Vagina (tissue), 2 donors: ENCODE measurements at regions of chr1 and their contacts with region 1.

Region 1: GRCh38 chr1:115423776-115424175 is 85.7 kb upstream of the NGF start:
- DNase-seq: no peak
- H3K4me3 ChIP-seq: no peak overlapping the region
- H3K27ac ChIP-seq: no peak overlapping the region
- H3K4me1 ChIP-seq: no peaks in the 10 kb centered on the region
- H3K27me3 ChIP-seq: no peaks in the 10 kb centered on the region
- CTCF ChIP-seq: no peak
- POLR2A ChIP-seq: no peak

Region 2: GRCh38 chr1:115373305-115373704 is 50.5 kb before region 1 on chr1:
- intact Hi-C with region 1: no loop called
- DNase-seq: no peak
- H3K4me3 ChIP-seq: no peak overlapping the region
- H3K27ac ChIP-seq: no peak overlapping the region
- H3K4me1 ChIP-seq: no peaks in the 10 kb centered on the region
- H3K27me3 ChIP-seq: no peaks in the 10 kb centered on the region
- CTCF ChIP-seq: no peak
- POLR2A ChIP-seq: no peak

Region 3: GRCh38 chr1:115624859-115625258 is 201.1 kb after region 1 on chr1:
- intact Hi-C with region 1: no loop called
- DNase-seq: no peak
- H3K4me3 ChIP-seq: no peak overlapping the region
- H3K27ac ChIP-seq: no peak overlapping the region
- H3K4me1 ChIP-seq: no peaks in the 10 kb centered on the region
- H3K27me3 ChIP-seq: no peaks in the 10 kb centered on the region
- CTCF ChIP-seq: no peak
- POLR2A ChIP-seq: no peak

Region 4: GRCh38 chr1:116556289-116557006 is 1132.7 kb after region 1 on chr1:
- intact Hi-C with region 1: loop called (anchors 5 kb)
- DNase-seq: no peak
- H3K4me3 ChIP-seq: no peak overlapping the region
- H3K27ac ChIP-seq: no peak overlapping the region
- H3K4me1 ChIP-seq: peaks cover 17% of the 10 kb centered on the region
- H3K27me3 ChIP-seq: no peaks in the 10 kb centered on the region
- CTCF ChIP-seq: no peak
- POLR2A ChIP-seq: no peak